Activated CD4-positive, alpha-beta memory T cell treated with anti-CD3 and anti-CD28 coated beads for 36 hours (primary cell): ENCODE measurements at regions of chr1 and their contacts with region 1.

Region 1: GRCh38 chr1:234188454-234188792 is 184.8 kb upstream of the COA6 start:
- DNase-seq: peak; percentile 34
- H3K4me3 Mint-ChIP-seq: no peak overlapping the region
- H3K27ac Mint-ChIP-seq: no peak overlapping the region
- H3K4me1 Mint-ChIP-seq: peaks cover 6% of the 10 kb centered on the region
- H3K27me3 Mint-ChIP-seq: peaks cover 56% of the 10 kb centered on the region

Region 2: DNA sequence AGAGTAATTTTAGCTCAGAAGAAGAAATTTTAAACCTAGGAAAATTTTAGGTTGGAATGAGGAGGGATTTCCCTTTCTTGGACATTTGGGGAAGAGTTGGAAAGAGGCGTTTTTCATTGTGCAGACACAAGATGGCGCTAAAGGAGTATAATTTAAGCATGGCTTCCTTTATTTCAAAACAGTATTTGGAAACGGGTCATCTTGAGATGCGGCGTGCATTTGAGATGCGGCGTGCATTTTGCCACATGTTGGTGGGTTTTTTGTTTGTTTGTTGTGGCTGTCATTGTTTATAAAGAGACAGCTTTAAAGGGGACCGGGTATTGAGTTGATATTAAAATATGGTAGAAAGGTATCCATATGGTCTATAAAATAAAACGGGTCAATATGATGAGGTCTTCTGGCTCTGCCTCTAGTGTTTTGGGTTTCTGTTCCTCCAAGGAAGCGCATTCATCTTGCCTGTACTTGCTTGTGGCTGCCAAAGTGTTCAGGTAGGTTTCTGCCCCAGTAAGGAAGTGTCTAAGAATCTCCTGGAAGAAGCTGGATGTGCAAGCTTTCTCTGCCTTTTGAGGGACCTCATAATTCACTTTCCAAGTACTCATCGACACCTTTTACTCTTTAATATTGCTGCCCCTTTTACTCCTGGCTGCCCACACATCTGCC is 73.6 kb before region 1 on chr1:
- CTCF ChIA-PET with region 1: interaction called, 4 read pairs
- POLR2A ChIA-PET with region 1: no interaction called
- intact Hi-C with region 1: loop called (anchors 10 kb)
- DNase-seq: peak; percentile 38
- H3K4me3 Mint-ChIP-seq: peak overlapping the region; percentile 25
- H3K27ac Mint-ChIP-seq: no peak overlapping the region
- H3K4me1 Mint-ChIP-seq: peaks cover 7% of the 10 kb centered on the region
- H3K27me3 Mint-ChIP-seq: peaks cover 15% of the 10 kb centered on the region